Activated CD4-positive, alpha-beta memory T cell treated with anti-CD3 and anti-CD28 coated beads, Interleukin-2, amount 10 ng/mL, durations not matched to agents 7 days and 5 days (primary cell): ENCODE measurements at regions of chr11 and their contacts with region 1.

Region 1: DNA sequence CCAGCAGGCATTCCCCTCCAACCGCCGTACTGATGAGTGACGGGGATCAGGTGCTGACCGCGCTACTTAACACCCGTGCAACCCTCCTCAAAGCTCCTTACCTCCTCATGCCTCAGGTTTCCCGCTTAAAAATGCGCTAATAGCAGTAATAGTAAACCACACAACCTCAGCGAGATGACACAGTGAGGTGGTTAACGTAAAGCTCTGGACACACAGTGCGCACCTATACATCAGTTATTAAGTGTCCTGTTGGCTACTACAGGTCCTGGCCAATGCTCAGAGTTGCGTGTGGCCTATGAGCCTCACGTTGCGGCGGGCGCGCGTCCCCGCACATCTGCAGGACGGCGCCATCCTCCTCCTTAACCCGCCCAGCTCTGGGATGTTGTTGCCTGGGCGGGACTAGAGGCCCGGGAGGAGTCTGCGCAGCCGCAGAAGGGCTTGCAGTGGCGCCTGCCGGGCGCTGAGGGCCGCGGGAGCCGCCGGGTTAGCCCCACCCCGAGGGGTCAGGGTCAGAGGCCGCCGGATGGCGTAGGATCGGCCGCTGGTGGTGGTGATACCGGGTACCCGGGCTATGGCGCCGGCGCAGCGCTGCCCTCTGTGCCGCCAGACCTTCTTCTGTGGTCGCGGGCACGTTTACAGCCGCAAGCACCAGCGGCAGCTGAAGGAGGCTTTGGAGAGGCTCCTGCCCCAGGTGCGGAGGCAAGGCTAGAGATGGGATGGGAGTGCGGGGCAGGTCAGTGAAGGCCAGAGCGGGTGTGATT is at the start of gene CENATAC:
- DNase-seq: peak; percentile 98
- H3K4me3 Mint-ChIP-seq: peak within 1 kb of the TSS; percentile 99
- H3K27ac Mint-ChIP-seq: peak within 1 kb of the TSS; percentile 95
- H3K4me1 Mint-ChIP-seq: peaks cover 36% of the 10 kb centered on the region
- H3K27me3 Mint-ChIP-seq: no peaks in the 10 kb centered on the region
- total RNA-seq, gene CENATAC: 34.6 to 35.0 TPM

Region 2: DNA sequence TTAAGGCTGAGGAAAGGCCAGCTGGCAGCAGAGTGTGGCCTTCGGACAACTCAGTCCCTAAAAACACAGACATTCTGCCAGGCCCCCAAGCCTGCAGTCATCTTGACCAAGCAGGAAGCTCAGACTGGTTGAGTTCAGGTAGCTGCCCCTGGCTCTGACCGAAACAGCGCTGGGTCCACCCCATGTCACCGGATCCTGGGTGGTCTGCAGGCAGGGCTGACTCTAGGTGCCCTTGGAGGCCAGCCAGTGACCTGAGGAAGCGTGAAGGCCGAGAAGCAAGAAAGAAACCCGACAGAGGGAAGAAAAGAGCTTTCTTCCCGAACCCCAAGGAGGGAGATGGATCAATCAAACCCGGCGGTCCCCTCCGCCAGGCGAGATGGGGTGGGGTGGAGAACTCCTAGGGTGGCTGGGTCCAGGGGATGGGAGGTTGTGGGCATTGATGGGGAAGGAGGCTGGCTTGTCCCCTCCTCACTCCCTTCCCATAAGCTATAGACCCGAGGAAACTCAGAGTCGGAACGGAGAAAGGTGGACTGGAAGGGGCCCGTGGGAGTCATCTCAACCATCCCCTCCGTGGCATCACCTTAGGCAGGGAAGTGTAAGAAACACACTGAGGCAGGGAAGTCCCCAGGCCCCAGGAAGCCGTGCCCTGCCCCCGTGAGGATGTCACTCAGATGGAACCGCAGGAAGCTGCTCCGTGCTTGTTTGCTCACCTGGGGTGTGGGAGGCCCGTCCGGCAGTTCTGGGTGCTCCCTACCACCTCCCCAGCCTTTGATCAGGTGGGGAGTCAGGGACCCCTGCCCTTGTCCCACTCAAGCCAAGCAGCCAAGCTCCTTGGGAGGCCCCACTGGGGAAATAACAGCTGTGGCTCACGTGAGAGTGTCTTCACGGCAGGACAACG is 102.4 kb before region 1 on chr11:
- CTCF ChIA-PET with region 1: no interaction called
- POLR2A ChIA-PET with region 1: no interaction called
- DNase-seq: peak; percentile 70
- H3K4me3 Mint-ChIP-seq: peak overlapping the region; percentile 3
- H3K27ac Mint-ChIP-seq: peak overlapping the region; percentile 40
- H3K4me1 Mint-ChIP-seq: peaks cover 55% of the 10 kb centered on the region
- H3K27me3 Mint-ChIP-seq: no peaks in the 10 kb centered on the region

Region 3: GRCh38 chr11:118921929-118922744 is 75.7 kb before region 1 on chr11:
- CTCF ChIA-PET with region 1: no interaction called
- POLR2A ChIA-PET with region 1: interaction called, 10 read pairs
- DNase-seq: no peak
- H3K4me3 Mint-ChIP-seq: peak overlapping the region; percentile 93
- H3K27ac Mint-ChIP-seq: no peak overlapping the region
- H3K4me1 Mint-ChIP-seq: peaks cover 74% of the 10 kb centered on the region
- H3K27me3 Mint-ChIP-seq: no peaks in the 10 kb centered on the region

Region 4: DNA sequence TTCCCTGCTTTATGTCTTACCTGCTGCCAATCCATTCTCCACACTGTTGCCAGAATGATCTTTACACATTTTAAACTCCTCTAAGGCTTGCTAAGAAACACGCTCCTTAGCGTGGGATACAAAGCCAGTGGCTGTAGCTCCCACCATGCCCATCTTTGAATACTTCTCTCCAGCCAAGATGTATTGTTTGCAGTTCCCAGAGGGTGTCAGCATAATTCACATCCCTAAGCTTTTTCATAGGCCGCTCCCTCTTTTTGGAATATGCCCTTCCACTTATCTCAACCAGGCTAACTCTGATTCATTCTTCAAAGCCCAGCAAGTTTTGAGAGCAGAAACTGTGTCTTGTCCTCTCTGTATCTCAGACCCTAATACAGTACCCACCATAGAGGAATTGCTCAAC is 49.8 kb before region 1 on chr11:
- CTCF ChIA-PET with region 1: no interaction called
- POLR2A ChIA-PET with region 1: no interaction called
- DNase-seq: no peak
- H3K4me3 Mint-ChIP-seq: no peak overlapping the region
- H3K27ac Mint-ChIP-seq: no peak overlapping the region
- H3K4me1 Mint-ChIP-seq: peaks cover 4% of the 10 kb centered on the region
- H3K27me3 Mint-ChIP-seq: peaks cover 32% of the 10 kb centered on the region

Region 5: DNA sequence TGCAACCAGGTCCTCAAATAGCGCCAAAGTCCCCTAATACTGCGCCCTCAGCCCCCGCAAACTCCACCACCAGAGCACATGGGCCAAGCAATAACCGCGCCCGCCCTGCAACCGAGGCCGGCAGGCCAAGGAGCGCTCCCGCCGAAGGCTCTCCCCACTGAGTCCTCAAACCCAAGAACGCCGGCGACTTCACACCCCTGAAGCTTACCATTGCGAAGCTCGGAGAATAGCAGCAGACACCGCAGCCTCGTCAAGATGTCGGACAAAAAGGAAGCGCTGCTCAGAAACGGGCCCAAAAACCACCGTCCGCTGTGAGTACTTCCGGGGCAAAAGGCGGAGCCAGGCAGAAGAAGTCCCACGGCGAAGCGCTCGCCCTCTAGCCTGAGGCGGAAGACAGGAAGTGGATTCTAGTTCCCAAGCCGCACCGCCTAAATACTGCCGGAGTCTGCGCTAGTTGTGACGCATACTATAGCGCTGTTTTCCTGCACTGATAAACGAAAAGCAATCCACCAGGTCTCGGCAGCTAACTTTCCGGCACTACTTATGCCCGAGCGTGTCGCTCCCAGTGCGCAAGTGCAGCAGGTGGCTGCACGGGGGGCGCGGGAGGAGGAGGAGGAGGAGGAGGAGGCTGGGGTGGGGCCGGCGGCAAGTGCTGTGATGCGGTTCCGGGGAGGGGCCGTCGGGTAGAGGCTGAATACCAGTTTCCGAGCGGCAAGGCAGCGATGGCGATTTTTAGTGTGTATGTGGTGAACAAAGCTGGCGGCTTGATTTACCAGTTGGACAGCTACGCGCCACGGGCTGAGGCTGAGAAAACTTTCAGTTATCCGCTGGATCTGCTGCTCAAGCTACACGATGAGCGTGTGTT is 20.5 kb after region 1 on chr11 and contains the starts of genes RPS25 and TRAPPC4:
- CTCF ChIA-PET with region 1: interaction called, 5 read pairs
- POLR2A ChIA-PET with region 1: interaction called, 150 read pairs
- DNase-seq: peak; percentile 96
- H3K4me3 Mint-ChIP-seq: peak within 1 kb of the TSS; percentile 90
- H3K27ac Mint-ChIP-seq: peak within 1 kb of the TSS; percentile 100
- H3K4me1 Mint-ChIP-seq: peaks cover 56% of the 10 kb centered on the region
- H3K27me3 Mint-ChIP-seq: no peaks in the 10 kb centered on the region
- total RNA-seq, gene RPS25: 1,257 to 1,287 TPM
- total RNA-seq, gene TRAPPC4: 67.0 to 71.1 TPM

Region 6: DNA sequence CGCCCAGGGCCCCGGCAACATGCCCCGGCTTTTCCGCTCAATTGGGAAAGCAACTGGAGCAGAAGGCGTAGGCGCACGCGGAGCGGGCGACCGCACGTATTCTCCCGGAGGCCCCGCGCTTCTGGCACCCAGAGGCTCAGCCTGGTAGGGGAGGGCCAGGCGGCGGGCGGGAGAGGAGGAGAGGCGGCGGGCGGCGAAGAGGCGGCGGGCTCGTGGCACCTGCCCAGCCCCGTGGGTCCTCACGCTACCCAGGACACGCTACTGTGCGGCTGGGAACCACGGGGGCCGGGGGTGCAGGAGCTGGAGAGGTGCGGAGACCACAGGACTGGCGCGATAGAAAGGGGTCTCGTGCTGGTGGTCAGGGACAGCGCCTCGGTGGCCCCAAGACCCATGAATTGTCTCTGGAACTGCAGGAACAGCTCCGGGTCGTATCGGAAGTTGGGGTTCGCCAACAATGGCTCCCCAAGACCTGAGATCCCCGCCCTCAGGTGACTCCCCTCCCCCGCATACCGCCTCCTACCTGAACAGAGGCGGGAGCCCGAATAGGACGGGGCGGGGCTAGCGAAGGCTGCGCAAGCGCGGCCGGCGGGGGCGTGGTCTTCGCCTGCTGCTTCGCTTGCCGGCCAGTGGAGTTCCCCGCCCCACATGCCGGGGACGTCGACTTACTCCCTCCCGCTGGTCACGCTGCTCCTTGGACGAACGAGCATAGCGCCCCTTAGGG is 32.7 kb after region 1 on chr11 and contains the start of gene SLC37A4:
- CTCF ChIA-PET with region 1: interaction called, 12 read pairs
- POLR2A ChIA-PET with region 1: interaction called, 22 read pairs
- DNase-seq: peak; percentile 98
- H3K4me3 Mint-ChIP-seq: peak within 1 kb of the TSS; percentile 77
- H3K27ac Mint-ChIP-seq: peak within 1 kb of the TSS; percentile 78
- H3K4me1 Mint-ChIP-seq: peaks cover 29% of the 10 kb centered on the region
- H3K27me3 Mint-ChIP-seq: no peaks in the 10 kb centered on the region
- total RNA-seq, gene SLC37A4: 31.6 to 33.9 TPM